Posterior vena cava (tissue), 2 donors: ENCODE measurements at regions of chr1 and their contacts with region 1.

Region 1: GRCh38 chr1:6489799-6490180 is 1.7 kb downstream of the PLEKHG5 start:
- DNase-seq: peak; percentile 89

Region 2: GRCh38 chr1:6646499-6647148 is 156.8 kb after region 1 on chr1:
- intact Hi-C with region 1: loop called (anchors 10 kb)
- DNase-seq: no peak